Activated CD8-positive, alpha-beta T cell treated with anti-CD3 and anti-CD28 coated beads for 36 hours (primary cell): ENCODE measurements at regions of chr19 and their contacts with region 1.

Region 1: GRCh38 chr19:38849860-38850435 is at the start of gene HNRNPL:
- DNase-seq: peak; percentile 100
- ATAC-seq: peak; percentile 71
- H3K4me3 Mint-ChIP-seq: peak within 1 kb of the TSS; percentile 97
- H3K27ac Mint-ChIP-seq: peak within 1 kb of the TSS; percentile 99
- H3K4me1 Mint-ChIP-seq: peaks cover 40% of the 10 kb centered on the region
- H3K27me3 Mint-ChIP-seq: no peaks in the 10 kb centered on the region
- CTCF ChIP-seq: no peak
- total RNA-seq, gene HNRNPL: 747 to 761 TPM

Region 2: GRCh38 chr19:38729653-38730469 is 120.1 kb before region 1 on chr19:
- CTCF ChIA-PET with region 1: interaction called, 3 read pairs
- POLR2A ChIA-PET with region 1: interaction called, 4 read pairs
- intact Hi-C with region 1: loop called (anchors 10 kb)
- DNase-seq: peak; percentile 90
- ATAC-seq: peak; percentile 66
- H3K4me3 Mint-ChIP-seq: no peak overlapping the region
- H3K27ac Mint-ChIP-seq: no peak overlapping the region
- H3K4me1 Mint-ChIP-seq: peaks cover 30% of the 10 kb centered on the region
- H3K27me3 Mint-ChIP-seq: no peaks in the 10 kb centered on the region
- CTCF ChIP-seq: peak; percentile 85

Region 3: GRCh38 chr19:38831142-38831605 is 18.8 kb before region 1 on chr19:
- CTCF ChIA-PET with region 1: interaction called, 9 read pairs
- POLR2A ChIA-PET with region 1: interaction called, 13 read pairs
- intact Hi-C with region 1: no loop called
- DNase-seq: peak; percentile 63
- ATAC-seq: peak; percentile 53
- H3K4me3 Mint-ChIP-seq: peak overlapping the region; percentile 88
- H3K27ac Mint-ChIP-seq: peak overlapping the region; percentile 96
- H3K4me1 Mint-ChIP-seq: peaks cover 24% of the 10 kb centered on the region
- H3K27me3 Mint-ChIP-seq: no peaks in the 10 kb centered on the region
- CTCF ChIP-seq: no peak

Region 4: GRCh38 chr19:38838573-38839269 is 11.2 kb before region 1 on chr19:
- CTCF ChIA-PET with region 1: interaction called, 9 read pairs
- POLR2A ChIA-PET with region 1: interaction called, 48 read pairs
- intact Hi-C with region 1: no loop called
- DNase-seq: peak; percentile 81
- ATAC-seq: peak; percentile 62
- H3K4me3 Mint-ChIP-seq: no peak overlapping the region
- H3K27ac Mint-ChIP-seq: peak overlapping the region; percentile 92
- H3K4me1 Mint-ChIP-seq: peaks cover 57% of the 10 kb centered on the region
- H3K27me3 Mint-ChIP-seq: no peaks in the 10 kb centered on the region
- CTCF ChIP-seq: no peak

Region 5: DNA sequence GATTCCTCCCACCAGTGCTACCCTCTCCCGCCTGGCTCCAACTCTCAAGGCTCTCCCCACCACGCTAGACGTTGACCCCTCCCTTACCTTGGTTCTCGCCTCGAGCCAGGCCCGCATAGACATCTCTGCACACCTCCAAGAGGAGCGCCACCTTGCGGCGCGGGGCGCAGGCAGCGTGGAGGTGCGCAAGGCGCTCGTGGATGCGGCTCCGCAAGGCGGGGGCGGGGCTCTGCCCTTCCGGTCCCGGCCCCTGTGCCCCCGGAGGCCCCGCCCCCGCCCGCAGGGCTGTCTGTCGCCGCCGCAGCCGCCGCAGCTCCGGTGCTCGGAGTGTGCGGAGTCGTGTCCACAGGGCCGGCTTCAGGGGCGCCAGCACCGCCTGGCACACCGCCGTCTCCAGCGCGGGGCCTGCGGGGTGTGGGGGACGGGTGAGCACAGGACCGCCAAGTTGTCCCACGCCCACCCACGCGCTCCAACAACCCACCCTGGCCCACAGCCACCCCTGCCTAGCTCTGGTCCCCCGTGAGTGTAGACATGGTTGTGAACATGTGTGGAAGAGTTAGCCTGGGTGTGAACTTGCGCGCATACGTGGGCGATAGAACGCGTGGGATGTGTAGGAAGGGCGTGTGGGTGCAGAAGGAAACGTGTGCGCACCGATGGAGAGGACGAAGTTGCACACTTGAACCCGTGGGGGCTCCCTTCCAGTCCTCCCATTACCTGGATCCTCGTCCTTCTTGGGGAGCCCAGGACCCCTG is 20.1 kb after region 1 on chr19:
- CTCF ChIA-PET with region 1: interaction called, 20 read pairs
- POLR2A ChIA-PET with region 1: interaction called, 152 read pairs
- intact Hi-C with region 1: loop called (anchors 1 kb)
- DNase-seq: peak; percentile 95
- ATAC-seq: peak; percentile 83
- H3K4me3 Mint-ChIP-seq: peak overlapping the region; percentile 85
- H3K27ac Mint-ChIP-seq: peak overlapping the region; percentile 92
- H3K4me1 Mint-ChIP-seq: peaks cover 43% of the 10 kb centered on the region
- H3K27me3 Mint-ChIP-seq: no peaks in the 10 kb centered on the region
- CTCF ChIP-seq: peak; percentile 90

Region 6: DNA sequence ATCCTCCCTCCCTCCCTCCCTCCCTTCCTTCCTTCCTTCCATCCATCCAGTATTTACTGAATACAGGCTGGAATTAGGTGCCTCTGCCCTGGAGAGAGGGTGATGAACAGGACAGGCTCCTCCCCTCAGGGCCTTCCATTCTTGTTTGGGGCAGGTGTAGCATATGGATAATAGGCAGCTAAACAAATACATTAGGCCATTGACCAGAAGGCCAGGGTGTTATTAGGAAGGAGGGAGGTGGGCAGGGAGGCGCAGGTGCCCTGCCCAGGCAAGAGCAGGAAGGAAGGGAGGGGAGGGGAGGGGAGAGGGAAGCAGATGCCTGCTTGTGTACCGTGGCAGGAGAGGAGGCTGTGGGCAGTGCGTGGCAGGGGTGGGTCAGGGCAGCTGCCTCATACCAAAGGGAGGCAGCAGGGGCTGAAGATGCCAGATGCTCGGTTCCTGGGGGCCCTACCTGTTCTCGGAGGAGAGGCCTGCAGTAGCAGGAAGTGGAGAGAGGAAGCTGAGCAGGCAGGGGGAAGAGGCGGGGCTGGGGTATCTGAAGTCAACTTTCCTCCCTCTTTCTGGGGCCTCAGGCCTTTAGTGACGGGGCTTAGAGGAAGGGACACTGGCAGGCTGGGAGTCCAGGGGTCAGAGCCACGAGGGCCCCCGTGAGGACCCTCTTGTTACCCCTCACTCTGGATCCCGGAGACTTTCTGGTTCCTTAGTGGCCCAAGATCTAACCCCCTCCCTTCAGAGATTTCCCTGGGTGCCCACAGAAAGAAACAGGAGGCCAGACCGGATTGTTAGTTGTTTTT is 28.0 kb after region 1 on chr19 and contains the start of gene RINL:
- CTCF ChIA-PET with region 1: interaction called, 4 read pairs
- POLR2A ChIA-PET with region 1: interaction called, 21 read pairs
- intact Hi-C with region 1: no loop called
- DNase-seq: peak; percentile 86
- ATAC-seq: peak; percentile 93
- H3K4me3 Mint-ChIP-seq: peak within 1 kb of the TSS; percentile 95
- H3K27ac Mint-ChIP-seq: peak within 1 kb of the TSS; percentile 98
- H3K4me1 Mint-ChIP-seq: peaks cover 34% of the 10 kb centered on the region
- H3K27me3 Mint-ChIP-seq: no peaks in the 10 kb centered on the region
- CTCF ChIP-seq: no peak
- total RNA-seq, gene RINL: 85.5 to 87.7 TPM